Common myeloid progenitor, CD34-positive (primary cell): ENCODE measurements at regions of chr15 and their contacts with region 1.

Region 1: GRCh38 chr15:68275165-68275746 is 2.3 kb upstream of the FEM1B start:
- DNase-seq: no peak
- H3K4me3 ChIP-seq: no peak overlapping the region
- H3K27ac ChIP-seq: no peak overlapping the region
- H3K4me1 ChIP-seq: peaks cover 16 to 30% (median 23%) of the 10 kb centered on the region in 4 experiments
- H3K27me3 ChIP-seq: no peaks in the 10 kb centered on the region

Region 2: GRCh38 chr15:68292157-68292781 is 17.0 kb after region 1 on chr15:
- CTCF ChIA-PET with region 1: interaction called, 11 read pairs
- POLR2A ChIA-PET with region 1: interaction called, 7 read pairs
- DNase-seq: no peak
- H3K4me3 ChIP-seq: no peak overlapping the region
- H3K27ac ChIP-seq: no peak overlapping the region
- H3K4me1 ChIP-seq: peaks cover 0 to 13% (median 6%) of the 10 kb centered on the region in 4 experiments
- H3K27me3 ChIP-seq: no peaks in the 10 kb centered on the region

Region 3: DNA sequence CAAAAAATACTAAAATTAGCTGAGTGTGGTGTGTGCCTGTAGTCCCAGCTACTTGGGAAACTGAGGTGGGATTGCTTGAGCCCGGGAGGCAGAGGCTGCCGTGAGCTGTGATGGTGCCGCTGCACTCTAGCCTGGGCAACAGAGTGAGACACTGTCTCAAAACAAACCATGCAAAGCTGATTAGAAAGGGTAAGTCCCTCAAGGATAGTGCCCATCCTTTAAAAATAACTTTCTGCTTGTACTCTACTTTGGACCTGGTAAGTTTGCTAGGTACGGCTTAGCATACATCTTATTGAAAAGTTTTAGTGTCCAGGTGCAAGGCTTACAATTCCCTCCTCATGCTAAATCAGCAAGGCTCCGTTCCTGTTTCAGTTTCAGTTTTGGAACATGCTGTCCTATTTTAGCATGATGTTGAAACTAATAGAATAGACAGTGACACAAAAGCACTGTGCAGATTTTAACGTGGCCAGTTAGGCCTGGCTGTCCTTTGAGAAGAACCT is 23.7 kb after region 1 on chr15:
- CTCF ChIA-PET with region 1: interaction called, 10 read pairs
- POLR2A ChIA-PET with region 1: no interaction called
- DNase-seq: peak; percentile 40 to 78 (median 71)
- H3K4me3 ChIP-seq: peak overlapping the region in 5 of 7 experiments; percentile 25 to 75 (median 66)
- H3K27ac ChIP-seq: peak overlapping the region in 1 of 2 experiments; percentile 27
- H3K4me1 ChIP-seq: peaks cover 0 to 18% (median 9%) of the 10 kb centered on the region in 4 experiments
- H3K27me3 ChIP-seq: no peaks in the 10 kb centered on the region

Region 4: GRCh38 chr15:68352401-68353062 is 77.3 kb after region 1 on chr15:
- CTCF ChIA-PET with region 1: no interaction called
- POLR2A ChIA-PET with region 1: no interaction called
- DNase-seq: peak; percentile 84 to 96 (median 95)
- H3K4me3 ChIP-seq: no peak overlapping the region
- H3K27ac ChIP-seq: peak overlapping the region; percentile 6 to 86
- H3K4me1 ChIP-seq: peaks cover 2 to 30% (median 23%) of the 10 kb centered on the region in 4 experiments
- H3K27me3 ChIP-seq: no peaks in the 10 kb centered on the region